Left colon (tissue), 2 donors: ENCODE measurements at regions of chr1 and their contacts with region 1.

Region 1: GRCh38 chr1:3069491-3070303 is 694 bp downstream of the PRDM16 start:
- DNase-seq: peak in 1 of 2 donors; percentile 39
- ATAC-seq: peak; percentile 75

Region 2: DNA sequence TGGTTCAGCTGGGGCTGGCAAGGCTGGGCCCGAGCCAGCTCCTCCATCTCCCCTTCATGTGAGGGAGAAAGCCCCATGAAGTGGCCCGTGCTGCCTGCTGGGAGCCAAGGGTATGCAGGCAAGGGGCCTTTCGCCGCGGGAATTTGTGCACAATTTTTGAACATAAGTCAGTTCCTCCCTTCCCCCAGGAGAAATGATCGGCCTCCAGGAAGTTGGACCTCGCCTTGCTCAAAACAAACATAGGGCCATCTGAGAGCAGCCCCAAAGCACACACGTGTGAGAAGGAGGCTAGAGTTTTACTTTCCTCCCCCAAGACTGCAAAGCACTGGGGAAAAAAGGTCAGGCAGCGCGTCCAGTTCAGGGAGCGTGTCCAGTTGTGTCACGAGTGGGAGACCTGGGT is 64.0 kb after region 1 on chr1:
- intact Hi-C with region 1: loop called in 1 of 2 experiments (anchors 10 kb)
- DNase-seq: peak in 1 of 2 donors; percentile 10
- ATAC-seq: peak; percentile 88